ENCODE measurements at regions of chr2 and their contacts with region 1.

Region 1: GRCh38 chr2:216519154-216519762 is 20.6 kb downstream of the RPL37A start:
- DNase-seq: peak; percentile 83
- ATAC-seq: peak; percentile 78
- H3K4me3 Mint-ChIP-seq: no peak overlapping the region
- H3K27ac Mint-ChIP-seq: no peak overlapping the region
- H3K4me1 Mint-ChIP-seq: peaks cover 5% of the 10 kb centered on the region
- H3K27me3 Mint-ChIP-seq: no peaks in the 10 kb centered on the region

Region 2: GRCh38 chr2:216507220-216508160 is 11.8 kb before region 1 on chr2:
- CTCF ChIA-PET with region 1: interaction called, 31 read pairs
- POLR2A ChIA-PET with region 1: interaction called, 3 read pairs
- DNase-seq: no peak
- ATAC-seq: no peak
- H3K4me3 Mint-ChIP-seq: no peak overlapping the region
- H3K27ac Mint-ChIP-seq: no peak overlapping the region
- H3K4me1 Mint-ChIP-seq: peaks cover 11% of the 10 kb centered on the region
- H3K27me3 Mint-ChIP-seq: no peaks in the 10 kb centered on the region

Region 3: GRCh38 chr2:216532562-216532961 is 13.3 kb after region 1 on chr2:
- CTCF ChIA-PET with region 1: interaction called, 10 read pairs
- POLR2A ChIA-PET with region 1: no interaction called
- DNase-seq: no peak
- ATAC-seq: no peak
- H3K4me3 Mint-ChIP-seq: no peak overlapping the region
- H3K27ac Mint-ChIP-seq: no peak overlapping the region
- H3K4me1 Mint-ChIP-seq: peaks cover 9% of the 10 kb centered on the region
- H3K27me3 Mint-ChIP-seq: no peaks in the 10 kb centered on the region

Region 4: DNA sequence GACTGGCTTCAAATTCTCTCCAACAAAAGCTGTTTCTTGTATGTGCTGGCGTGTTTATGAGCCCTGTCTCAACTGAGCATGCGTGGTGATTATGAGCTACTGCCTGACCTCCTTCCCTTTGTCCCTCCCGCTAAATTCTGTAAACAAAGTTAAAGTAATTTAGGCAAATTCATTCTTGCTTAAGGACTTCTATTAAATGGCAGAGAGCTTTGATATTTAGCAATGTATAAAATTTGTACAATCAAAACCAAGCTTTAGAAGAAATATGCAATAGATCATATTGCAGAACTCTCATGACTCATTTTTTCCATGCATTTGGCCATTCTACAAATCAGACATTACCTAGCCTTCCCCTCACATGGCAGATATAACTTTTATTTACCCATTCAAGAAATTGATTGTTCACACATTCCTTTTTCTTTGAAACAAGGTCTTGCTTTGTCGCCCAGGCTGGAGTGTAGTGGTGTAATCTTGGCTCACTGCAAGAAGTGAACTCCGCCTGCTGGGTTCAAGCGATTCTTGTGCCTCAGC is 132.2 kb after region 1 on chr2:
- CTCF ChIA-PET with region 1: interaction called, 11 read pairs
- POLR2A ChIA-PET with region 1: no interaction called
- DNase-seq: no peak
- ATAC-seq: no peak
- H3K4me3 Mint-ChIP-seq: no peak overlapping the region
- H3K27ac Mint-ChIP-seq: no peak overlapping the region
- H3K4me1 Mint-ChIP-seq: peaks cover 9% of the 10 kb centered on the region
- H3K27me3 Mint-ChIP-seq: no peaks in the 10 kb centered on the region

Region 5: DNA sequence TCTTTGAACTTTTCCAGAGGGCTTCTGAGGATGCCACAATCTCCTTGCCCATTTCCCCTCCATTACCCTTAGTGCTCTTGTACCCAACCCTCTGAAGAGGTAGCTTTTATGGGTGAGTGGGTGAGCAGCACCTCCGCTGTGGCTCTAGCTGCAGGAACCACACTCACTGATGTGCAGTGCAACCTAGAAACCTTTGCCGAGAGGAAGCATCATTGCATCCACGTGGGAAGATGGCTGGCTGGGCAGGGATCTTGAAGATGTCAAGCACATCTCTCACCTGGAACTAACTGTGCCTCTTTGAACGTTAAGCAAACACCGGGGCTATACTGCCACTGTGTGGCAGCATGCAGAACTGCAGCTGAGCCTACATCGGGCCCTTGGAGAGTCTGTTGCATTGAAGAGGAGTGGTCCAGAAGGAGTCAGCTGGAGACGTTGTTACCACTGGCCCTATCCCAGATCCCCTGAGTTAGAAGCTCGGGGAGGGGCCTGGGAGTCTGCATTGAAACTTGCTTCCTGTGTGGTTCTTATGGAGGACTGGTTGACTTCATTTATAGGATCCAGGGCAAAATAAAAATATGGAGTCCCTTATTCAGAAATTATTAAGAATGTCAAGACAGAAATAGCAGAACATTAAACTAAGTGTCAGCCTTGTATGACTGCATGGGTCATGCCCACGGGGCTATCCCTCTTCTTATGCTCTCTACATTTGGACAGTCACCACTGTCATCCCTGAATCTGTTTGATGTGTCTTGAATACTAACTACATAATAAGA is 147.4 kb after region 1 on chr2:
- CTCF ChIA-PET with region 1: interaction called, 336 read pairs
- POLR2A ChIA-PET with region 1: interaction called, 3 read pairs
- DNase-seq: peak; percentile 77
- ATAC-seq: peak; percentile 78
- H3K4me3 Mint-ChIP-seq: no peak overlapping the region
- H3K27ac Mint-ChIP-seq: no peak overlapping the region
- H3K4me1 Mint-ChIP-seq: no peaks in the 10 kb centered on the region
- H3K27me3 Mint-ChIP-seq: peaks cover 5% of the 10 kb centered on the region

Measured in activated CD8-positive, alpha-beta T cell treated with anti-CD3 and anti-CD28 coated beads, Interleukin-2, amount 10 ng/mL, durations not matched to agents 7 days and 5 days (primary cell).